Heart left ventricle (tissue), 16 donors: ENCODE measurements at regions of chr15 and their contacts with region 1.

Region 1: DNA sequence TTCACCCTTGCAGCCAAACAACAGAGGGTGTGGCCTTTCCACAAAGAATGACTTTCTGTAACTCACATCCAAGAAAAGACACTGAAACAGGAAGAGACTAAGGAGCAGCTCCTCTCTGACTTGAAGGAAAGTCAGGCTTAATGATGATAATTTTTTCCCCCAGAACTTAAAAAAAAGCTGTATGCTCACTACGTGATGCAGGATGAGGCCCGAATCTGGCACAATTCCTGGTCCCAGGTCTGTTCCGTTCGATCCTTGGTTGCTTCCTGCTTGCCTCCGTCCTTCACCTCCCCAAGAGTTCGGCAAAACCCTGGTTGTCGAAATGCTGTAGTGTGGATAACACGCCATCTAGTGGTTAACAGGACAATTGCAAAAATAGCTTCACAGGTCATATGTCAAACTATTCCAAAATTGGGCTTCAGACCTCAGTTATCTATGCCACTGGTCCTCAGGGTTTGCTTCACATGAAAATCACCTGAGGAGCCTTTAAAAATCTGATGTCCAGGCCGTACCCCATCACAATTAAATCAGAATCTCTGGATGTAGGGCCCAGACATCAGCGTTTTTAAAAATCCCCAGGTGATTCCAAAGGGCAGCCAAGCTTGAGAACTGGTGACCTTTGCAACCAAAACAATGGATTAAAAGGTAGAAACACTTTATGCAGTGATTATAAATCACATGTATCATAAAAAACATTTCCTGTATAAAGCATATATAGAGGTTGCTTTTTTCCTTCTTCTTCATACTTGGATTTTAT is 28.1 kb upstream of the SYNM start:
- DNase-seq: peak in 4 of 5 donors; percentile 60 to 69 (median 64)
- ATAC-seq: peak; percentile 71 to 91 (median 86)
- H3K4me3 ChIP-seq: peak overlapping the region in 10 of 12 donors; percentile 25 to 54 (median 42)
- H3K27ac ChIP-seq: peak overlapping the region in 1 of 12 donors; percentile 47
- H3K4me1 ChIP-seq: peaks cover 0 to 4% (median 0%) of the 10 kb centered on the region in 12 donors
- H3K27me3 ChIP-seq: no peaks in the 10 kb centered on the region
- CTCF ChIP-seq: peak; percentile 76 to 93 (median 86)
- POLR2A ChIP-seq: no peak

Region 2: DNA sequence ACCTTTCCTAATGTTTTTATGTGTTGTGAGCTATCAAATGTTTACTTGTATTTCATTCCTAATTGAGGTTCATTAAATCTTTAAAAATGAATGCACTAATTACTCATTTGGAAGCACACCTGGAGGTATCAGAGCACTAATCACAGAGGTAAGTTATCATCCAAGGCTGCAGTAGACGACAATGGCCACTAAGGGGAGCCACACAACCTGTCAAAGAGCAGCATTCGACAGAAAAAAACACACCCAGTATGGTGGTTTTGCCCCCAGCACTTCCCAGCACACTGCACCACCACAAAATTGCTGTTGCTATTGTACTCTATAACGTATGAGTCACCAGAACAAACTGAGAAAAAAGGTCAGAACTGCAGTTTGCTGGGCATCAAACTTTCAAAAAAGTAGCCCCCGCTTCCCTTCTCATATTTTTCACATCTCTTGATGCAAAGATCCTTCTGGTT is 634.3 kb before region 1 on chr15:
- intact Hi-C with region 1: loop called in 9 of 10 experiments (anchors 2 to 10 kb)
- DNase-seq: peak in 1 of 5 donors; percentile 39
- ATAC-seq: peak in 3 of 4 donors; percentile 45 to 50 (median 47)
- H3K4me3 ChIP-seq: no peak overlapping the region
- H3K27ac ChIP-seq: no peak overlapping the region
- H3K4me1 ChIP-seq: no peaks in the 10 kb centered on the region
- H3K27me3 ChIP-seq: peaks cover 0 to 36% (median 4%) of the 10 kb centered on the region in 9 donors
- CTCF ChIP-seq: peak; percentile 55 to 80 (median 72)
- POLR2A ChIP-seq: no peak

Region 3: DNA sequence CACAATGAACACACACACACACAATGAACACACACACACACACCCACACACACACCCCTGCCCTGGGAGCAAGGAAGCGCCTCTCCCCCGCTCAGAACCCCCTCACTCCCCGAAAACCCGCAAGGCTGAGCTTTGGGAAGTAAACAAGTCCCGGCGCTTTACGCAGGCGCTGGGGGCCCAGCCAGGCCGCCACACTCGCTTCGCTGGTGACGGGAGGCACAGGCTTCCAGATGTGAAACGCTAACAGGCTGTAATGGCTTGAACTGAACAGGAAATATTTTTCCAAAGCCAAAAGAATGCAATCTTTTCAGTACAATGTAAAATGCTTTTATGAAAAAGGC is 551.1 kb before region 1 on chr15:
- intact Hi-C with region 1: loop called in 2 of 10 experiments (anchors 2 to 5 kb)
- DNase-seq: no peak
- ATAC-seq: peak in 1 of 4 donors; percentile 32
- H3K4me3 ChIP-seq: peak overlapping the region in 1 of 12 donors; percentile 19
- H3K27ac ChIP-seq: no peak overlapping the region
- H3K4me1 ChIP-seq: no peaks in the 10 kb centered on the region
- H3K27me3 ChIP-seq: peaks cover 0 to 10% (median 0%) of the 10 kb centered on the region in 9 donors
- CTCF ChIP-seq: no peak
- POLR2A ChIP-seq: no peak

Region 4: DNA sequence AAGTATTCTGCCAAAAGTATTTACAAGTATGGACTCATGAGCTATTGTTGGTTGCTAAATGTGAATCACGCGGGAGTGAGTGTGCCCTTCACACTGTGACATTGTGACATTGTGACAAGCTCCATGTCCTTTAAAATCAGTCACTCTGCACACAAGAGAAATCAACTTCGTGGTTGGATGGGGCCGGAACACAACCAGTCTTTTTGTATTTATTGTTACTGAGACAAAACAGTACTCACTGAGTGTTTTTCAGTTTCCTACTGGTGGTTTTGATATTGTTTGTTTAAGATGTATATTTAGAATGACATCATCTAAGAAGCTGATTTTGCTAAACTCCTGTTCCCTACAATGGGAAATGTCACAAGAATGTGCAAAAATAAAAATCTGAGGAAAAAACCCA is 58.5 kb after region 1 on chr15:
- intact Hi-C with region 1: no loop called
- DNase-seq: no peak
- ATAC-seq: peak in 2 of 4 donors; percentile 56 to 66
- H3K4me3 ChIP-seq: no peak overlapping the region
- H3K27ac ChIP-seq: peak overlapping the region in 11 of 12 donors; percentile 61 to 98 (median 68)
- H3K4me1 ChIP-seq: peaks cover 0 to 58% (median 17%) of the 10 kb centered on the region in 12 donors
- H3K27me3 ChIP-seq: no peaks in the 10 kb centered on the region
- CTCF ChIP-seq: no peak
- POLR2A ChIP-seq: no peak